ENCODE measurements at regions of chr15 and their contacts with region 1.

Region 1: DNA sequence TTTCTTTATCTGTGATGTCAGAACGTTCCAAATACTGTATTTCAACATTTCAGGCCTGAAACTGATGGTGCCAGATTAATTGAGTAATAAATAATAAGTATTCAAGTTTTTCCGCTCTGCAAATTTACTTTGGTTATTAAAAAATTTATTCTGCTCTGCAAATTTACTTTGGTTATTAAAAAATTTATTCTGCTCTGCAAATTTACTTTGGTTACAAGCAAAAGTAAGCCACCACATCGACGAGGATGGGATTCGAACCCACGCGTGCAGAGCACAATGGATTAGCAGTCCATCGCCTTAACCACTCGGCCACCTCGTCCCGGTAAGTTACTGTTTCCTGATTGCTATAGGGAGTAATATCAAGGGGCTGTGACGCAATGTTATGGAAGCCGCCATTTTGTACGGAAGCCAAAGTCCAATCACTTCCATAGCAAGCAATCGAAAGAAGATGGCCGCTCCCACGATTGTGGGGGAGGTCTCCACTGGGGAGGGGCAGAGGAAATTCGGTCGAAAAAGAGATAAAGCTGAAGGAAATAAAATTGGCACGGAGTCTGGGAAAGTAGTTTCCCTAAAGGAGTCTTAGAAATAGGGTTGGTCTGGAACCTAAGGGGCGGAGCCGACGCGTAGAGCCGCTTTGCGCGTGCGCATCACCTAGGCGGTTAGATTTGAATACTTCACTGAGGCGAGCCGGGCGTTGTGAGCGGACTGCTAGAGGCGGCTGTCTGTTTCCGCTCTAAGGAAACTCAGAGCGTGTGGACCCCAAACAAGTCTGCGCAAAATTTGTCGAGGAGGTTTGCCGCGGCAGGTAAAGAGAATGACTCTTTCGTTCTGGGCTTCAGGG is at the start of gene KNL1:
- DNase-seq: peak; percentile 94
- H3K4me3 Mint-ChIP-seq: peak within 1 kb of the TSS; percentile 83
- H3K27ac Mint-ChIP-seq: peak within 1 kb of the TSS; percentile 96
- H3K4me1 Mint-ChIP-seq: peaks cover 48% of the 10 kb centered on the region
- H3K27me3 Mint-ChIP-seq: peaks cover 2% of the 10 kb centered on the region
- total RNA-seq, gene KNL1: 54.2 to 54.7 TPM

Region 2: DNA sequence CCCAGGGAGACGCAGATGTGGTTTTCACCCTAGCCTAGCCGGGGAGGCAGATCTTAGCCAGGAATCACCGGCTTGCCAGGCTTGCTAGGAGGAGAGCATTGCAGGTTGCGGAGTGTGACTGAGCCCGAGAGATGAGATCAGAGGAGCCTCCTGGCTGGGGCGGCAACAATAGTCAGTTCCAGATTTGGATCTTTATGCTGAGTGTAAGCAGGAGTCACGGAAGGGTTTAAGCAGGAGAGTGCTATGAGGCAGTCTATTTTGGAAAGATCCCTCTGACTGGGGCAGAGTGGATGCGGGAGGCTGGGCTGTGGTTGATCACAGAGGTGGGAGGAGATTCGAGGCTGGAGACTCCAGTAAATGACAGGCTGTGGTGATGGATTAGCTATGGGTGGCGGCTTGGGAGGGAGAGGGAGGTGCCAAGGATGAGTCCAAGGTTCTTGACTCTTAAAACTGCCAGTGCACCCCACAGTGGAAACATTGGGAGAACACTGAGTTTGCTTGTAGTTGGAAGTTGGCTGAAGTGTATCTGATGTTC is 163.5 kb before region 1 on chr15:
- CTCF ChIA-PET with region 1: no interaction called
- POLR2A ChIA-PET with region 1: no interaction called
- DNase-seq: no peak
- H3K4me3 Mint-ChIP-seq: no peak overlapping the region
- H3K27ac Mint-ChIP-seq: no peak overlapping the region
- H3K4me1 Mint-ChIP-seq: no peaks in the 10 kb centered on the region
- H3K27me3 Mint-ChIP-seq: peaks cover 28% of the 10 kb centered on the region

Region 3: DNA sequence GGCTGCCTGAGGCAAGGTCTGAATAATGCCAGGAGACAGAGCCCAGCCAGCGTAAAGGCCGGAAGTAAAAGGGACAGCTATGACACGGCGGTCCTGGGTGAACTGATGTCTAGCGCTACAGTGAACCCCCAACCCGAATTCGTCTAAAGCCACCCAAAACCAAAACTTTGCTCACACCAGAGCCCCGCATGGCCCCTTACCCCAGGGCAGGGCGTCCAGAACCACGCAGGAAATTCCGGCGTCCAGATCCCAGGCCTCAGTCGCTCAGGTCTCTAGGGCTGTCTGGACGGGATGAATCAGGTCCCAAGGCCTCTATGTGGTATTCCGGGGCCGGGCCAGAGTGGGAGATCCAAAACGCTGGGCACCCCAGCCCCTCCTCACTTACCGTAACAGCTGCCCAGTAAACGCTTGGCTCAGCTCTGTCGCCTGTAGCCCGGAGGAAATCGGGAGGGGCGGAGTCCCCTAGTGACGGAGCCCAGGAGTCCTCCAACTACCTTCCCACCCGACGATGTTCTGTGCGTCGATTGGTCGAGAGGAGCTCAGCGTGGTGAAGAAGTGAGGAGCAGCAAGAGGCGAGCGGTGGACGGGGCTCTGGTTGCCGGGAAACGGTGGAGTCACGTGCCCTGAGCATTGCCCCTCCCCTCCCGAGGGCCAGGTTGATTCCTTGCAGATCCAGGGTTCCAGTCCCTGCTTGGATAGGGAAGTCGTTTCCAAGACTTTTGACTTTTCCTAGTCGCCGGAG is 29.0 kb before region 1 on chr15 and contains the start of gene CCDC32:
- CTCF ChIA-PET with region 1: interaction called, 26 read pairs
- POLR2A ChIA-PET with region 1: interaction called, 25 read pairs
- DNase-seq: peak; percentile 97
- H3K4me3 Mint-ChIP-seq: peak within 1 kb of the TSS; percentile 90
- H3K27ac Mint-ChIP-seq: peak within 1 kb of the TSS; percentile 84
- H3K4me1 Mint-ChIP-seq: peaks cover 54% of the 10 kb centered on the region
- H3K27me3 Mint-ChIP-seq: peaks cover 3% of the 10 kb centered on the region
- total RNA-seq, gene CCDC32: 33.2 to 33.7 TPM

Region 4: DNA sequence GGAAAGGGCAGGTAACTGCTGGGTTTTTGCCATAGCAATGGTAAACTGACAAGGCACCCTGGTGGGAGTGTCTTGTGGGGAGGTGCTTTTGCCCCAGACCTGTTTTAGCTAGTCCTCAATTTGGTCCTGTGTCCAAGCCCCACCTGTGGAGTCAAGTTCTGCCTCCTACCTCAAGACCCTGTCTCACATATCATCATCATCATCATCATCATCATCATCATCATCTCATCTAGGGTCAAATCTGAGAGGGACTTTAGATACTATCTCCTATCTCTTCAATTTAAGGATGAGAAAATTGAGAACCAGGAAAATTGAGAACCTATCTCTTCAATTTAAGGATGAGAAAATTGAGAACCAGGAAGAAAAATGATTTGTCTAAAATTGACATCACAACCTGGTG is 10.1 kb after region 1 on chr15:
- CTCF ChIA-PET with region 1: interaction called, 24 read pairs
- POLR2A ChIA-PET with region 1: no interaction called
- DNase-seq: no peak
- H3K4me3 Mint-ChIP-seq: no peak overlapping the region
- H3K27ac Mint-ChIP-seq: no peak overlapping the region
- H3K4me1 Mint-ChIP-seq: peaks cover 2% of the 10 kb centered on the region
- H3K27me3 Mint-ChIP-seq: no peaks in the 10 kb centered on the region

Region 5: GRCh38 chr15:40618023-40618422 is 24.2 kb after region 1 on chr15:
- CTCF ChIA-PET with region 1: no interaction called
- POLR2A ChIA-PET with region 1: no interaction called
- DNase-seq: no peak
- H3K4me3 Mint-ChIP-seq: no peak overlapping the region
- H3K27ac Mint-ChIP-seq: no peak overlapping the region
- H3K4me1 Mint-ChIP-seq: no peaks in the 10 kb centered on the region
- H3K27me3 Mint-ChIP-seq: no peaks in the 10 kb centered on the region

Region 6: DNA sequence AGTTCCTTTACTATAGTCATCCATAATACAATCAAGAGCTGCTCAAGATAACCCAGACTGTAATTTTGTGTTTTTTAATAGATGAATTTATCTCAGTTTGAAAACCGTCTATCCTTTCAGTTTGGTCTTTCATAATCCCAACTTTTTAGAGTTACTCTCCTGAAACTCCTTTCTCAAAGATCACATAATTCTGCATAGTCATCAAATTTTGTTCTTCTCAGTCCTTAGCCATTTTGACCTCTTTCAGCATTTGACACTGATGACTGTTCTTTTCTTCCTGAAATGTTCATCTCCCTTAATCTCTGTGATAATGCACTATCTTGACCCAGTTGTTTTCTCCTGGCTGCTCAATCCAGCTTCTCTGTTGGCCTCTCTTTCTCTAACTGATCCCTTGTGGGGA is 53.7 kb after region 1 on chr15:
- CTCF ChIA-PET with region 1: interaction called, 11 read pairs
- POLR2A ChIA-PET with region 1: no interaction called
- DNase-seq: no peak
- H3K4me3 Mint-ChIP-seq: no peak overlapping the region
- H3K27ac Mint-ChIP-seq: no peak overlapping the region
- H3K4me1 Mint-ChIP-seq: no peaks in the 10 kb centered on the region
- H3K27me3 Mint-ChIP-seq: no peaks in the 10 kb centered on the region

Region 7: DNA sequence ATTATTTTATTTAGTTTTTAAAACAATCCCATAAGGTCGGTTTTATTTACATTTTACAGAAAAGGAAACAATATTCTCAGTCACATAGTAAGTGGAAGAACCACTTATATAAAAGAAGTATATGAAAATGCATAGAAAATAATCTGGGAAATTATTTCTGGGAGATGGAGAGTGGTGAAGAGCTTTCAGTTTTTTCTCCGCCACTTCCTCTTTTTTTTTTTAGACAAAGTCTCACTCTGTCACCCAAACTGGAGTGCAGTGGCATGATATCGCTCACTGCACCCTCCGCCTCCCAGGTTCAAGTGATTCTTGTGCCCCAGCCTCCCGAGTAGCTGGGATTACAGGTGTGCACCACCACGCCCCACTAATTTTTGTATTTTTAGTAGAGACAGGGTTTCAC is 122.4 kb after region 1 on chr15:
- CTCF ChIA-PET with region 1: no interaction called
- POLR2A ChIA-PET with region 1: no interaction called
- DNase-seq: no peak
- H3K4me3 Mint-ChIP-seq: no peak overlapping the region
- H3K27ac Mint-ChIP-seq: no peak overlapping the region
- H3K4me1 Mint-ChIP-seq: peaks cover 2% of the 10 kb centered on the region
- H3K27me3 Mint-ChIP-seq: no peaks in the 10 kb centered on the region

Measured in activated CD4-positive, alpha-beta memory T cell treated with anti-CD3 and anti-CD28 coated beads, Interleukin-2, amount 10 ng/mL, durations not matched to agents 7 days and 5 days (primary cell).